Transverse colon (tissue), 4 donors: ENCODE measurements at regions of chr7 and their contacts with region 1.

Region 1: GRCh38 chr7:93331706-93332571 is 99.8 kb downstream of the VPS50 start:
- DNase-seq: no peak
- H3K4me3 ChIP-seq: no peak overlapping the region
- H3K27ac ChIP-seq: no peak overlapping the region
- H3K4me1 ChIP-seq: no peaks in the 10 kb centered on the region
- H3K27me3 ChIP-seq: no peaks in the 10 kb centered on the region
- CTCF ChIP-seq: no peak
- EP300 ChIP-seq: no peak
- POLR2A ChIP-seq: no peak

Region 2: GRCh38 chr7:92992483-92992882 is 339.5 kb before region 1 on chr7:
- in situ Hi-C with region 1: no loop called
- intact Hi-C with region 1: loop called (anchors 5 kb)
- DNase-seq: no peak
- H3K4me3 ChIP-seq: no peak overlapping the region
- H3K27ac ChIP-seq: no peak overlapping the region
- H3K4me1 ChIP-seq: no peaks in the 10 kb centered on the region
- H3K27me3 ChIP-seq: no peaks in the 10 kb centered on the region
- CTCF ChIP-seq: no peak
- EP300 ChIP-seq: no peak
- POLR2A ChIP-seq: no peak

Region 3: DNA sequence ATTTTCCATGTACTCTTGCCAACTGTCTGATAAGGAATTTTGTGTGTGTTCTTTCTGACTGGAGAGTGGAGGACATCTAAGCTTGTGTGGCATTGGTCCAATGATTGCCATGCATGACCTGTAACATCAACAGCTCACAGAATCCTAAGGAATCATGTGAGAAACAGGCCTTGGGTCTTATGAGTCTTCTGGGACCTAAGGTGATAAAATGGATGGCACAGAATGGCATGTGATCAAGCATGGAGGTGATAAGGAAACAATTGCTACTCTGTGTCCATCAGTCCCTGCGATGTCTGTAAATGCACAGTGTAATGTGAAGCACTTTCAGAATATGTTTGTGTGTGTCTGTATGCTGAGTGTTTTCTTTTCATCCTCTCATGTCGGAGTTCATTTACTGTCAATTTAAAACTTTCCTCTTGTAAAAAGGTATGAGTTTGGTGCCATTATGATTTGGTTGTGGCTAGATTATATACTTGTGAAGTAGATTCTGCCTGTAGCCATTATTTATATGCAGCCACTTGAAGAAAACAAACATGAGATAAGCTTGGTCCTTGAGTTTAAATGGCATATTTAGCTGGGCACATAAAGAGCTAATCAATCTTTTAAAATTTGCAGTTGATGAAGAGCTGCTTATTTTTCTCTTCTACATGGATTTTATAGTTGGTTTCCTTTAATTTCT is 27.7 kb after region 1 on chr7:
- in situ Hi-C with region 1: no loop called
- intact Hi-C with region 1: no loop called
- DNase-seq: no peak
- H3K4me3 ChIP-seq: no peak overlapping the region
- H3K27ac ChIP-seq: no peak overlapping the region
- H3K4me1 ChIP-seq: no peaks in the 10 kb centered on the region
- H3K27me3 ChIP-seq: no peaks in the 10 kb centered on the region
- CTCF ChIP-seq: no peak
- EP300 ChIP-seq: no peak
- POLR2A ChIP-seq: no peak